AG04449 (cell line): ENCODE measurements at regions of chr4 and their contacts with region 1.

Region 1: DNA sequence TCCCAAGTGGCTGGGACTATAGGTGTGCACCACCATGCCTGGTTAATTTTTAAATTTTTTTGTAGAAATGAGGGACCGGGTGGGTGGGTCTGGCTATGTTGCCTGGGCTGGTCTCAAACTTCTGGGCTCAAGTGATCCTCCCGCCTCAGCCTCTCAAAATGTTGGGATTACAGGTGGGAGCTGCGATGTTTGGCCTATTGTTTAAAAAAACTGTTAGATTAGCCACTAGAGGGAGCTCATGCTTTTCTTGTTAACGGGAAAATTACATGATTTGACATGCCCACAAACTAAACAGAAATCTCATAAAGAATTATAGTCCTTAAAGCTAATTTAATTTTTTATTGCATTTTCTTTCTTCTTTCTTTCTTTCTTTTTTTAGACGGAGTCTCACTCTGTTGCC is 5.0 kb upstream of the SDAD1 start:
- DNase-seq: no peak
- H3K4me3 ChIP-seq: no peak overlapping the region
- CTCF ChIP-seq: peak; percentile 34

Region 2: DNA sequence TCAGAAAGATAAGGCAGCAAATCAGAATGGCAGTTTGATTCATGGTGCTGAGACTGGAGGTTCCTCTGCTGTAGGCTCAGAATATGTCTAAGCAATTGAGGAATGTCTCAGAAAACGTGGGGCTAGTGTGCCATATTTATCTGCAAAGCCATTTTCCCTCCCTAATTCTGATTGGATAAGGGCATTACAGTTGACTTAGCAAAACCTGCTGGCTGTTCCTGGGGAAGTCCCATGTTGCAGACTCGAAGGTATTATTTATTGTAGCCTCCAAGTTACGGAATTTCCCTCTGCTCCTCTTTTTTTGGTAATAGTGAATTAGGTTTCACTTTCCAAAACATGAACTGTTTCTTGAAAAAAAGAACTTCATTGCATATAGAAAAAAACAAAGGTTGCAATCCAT is 27.7 kb after region 1 on chr4 and contains the start of gene CXCL10:
- CTCF ChIA-PET with region 1: interaction called, 22 read pairs
- POLR2A ChIA-PET with region 1: no interaction called
- DNase-seq: no peak
- H3K4me3 ChIP-seq: no peak within 1 kb of the TSS
- CTCF ChIP-seq: no peak

Region 3: GRCh38 chr4:76055016-76055415 is 59.3 kb after region 1 on chr4:
- CTCF ChIA-PET with region 1: interaction called, 26 read pairs
- POLR2A ChIA-PET with region 1: no interaction called
- DNase-seq: no peak
- H3K4me3 ChIP-seq: no peak overlapping the region
- CTCF ChIP-seq: no peak

Region 4: DNA sequence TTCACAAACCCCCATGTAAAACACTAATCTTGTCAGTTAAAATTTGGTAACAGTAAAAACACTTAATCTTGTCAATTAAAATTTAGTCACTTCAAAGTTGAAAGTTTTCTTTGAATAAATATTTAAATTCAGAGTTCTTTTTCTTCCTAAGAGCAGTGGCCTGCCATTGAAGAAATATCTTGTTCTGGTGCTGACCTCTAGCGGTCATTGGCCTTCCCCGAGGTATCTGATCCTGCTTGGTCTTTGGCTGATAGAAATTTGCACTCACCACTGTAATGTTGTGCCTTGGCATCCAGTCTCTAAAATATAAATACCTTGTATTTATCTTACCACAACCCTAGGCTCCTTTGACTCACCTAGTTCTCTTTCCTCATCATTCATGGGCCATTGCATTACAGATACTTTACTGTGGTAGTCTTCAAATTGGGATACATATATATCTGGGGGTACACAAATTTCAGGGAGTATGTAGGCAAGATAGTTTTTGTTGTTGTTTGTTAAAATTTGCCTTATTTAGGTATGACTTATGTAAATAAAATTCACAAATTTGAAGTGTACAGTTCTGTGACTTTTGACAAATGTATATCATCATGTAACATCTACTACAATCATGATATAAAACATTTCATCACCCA is 72.0 kb after region 1 on chr4:
- CTCF ChIA-PET with region 1: interaction called, 153 read pairs
- POLR2A ChIA-PET with region 1: no interaction called
- DNase-seq: peak; percentile 29
- H3K4me3 ChIP-seq: no peak overlapping the region
- CTCF ChIP-seq: peak; percentile 67

Region 5: DNA sequence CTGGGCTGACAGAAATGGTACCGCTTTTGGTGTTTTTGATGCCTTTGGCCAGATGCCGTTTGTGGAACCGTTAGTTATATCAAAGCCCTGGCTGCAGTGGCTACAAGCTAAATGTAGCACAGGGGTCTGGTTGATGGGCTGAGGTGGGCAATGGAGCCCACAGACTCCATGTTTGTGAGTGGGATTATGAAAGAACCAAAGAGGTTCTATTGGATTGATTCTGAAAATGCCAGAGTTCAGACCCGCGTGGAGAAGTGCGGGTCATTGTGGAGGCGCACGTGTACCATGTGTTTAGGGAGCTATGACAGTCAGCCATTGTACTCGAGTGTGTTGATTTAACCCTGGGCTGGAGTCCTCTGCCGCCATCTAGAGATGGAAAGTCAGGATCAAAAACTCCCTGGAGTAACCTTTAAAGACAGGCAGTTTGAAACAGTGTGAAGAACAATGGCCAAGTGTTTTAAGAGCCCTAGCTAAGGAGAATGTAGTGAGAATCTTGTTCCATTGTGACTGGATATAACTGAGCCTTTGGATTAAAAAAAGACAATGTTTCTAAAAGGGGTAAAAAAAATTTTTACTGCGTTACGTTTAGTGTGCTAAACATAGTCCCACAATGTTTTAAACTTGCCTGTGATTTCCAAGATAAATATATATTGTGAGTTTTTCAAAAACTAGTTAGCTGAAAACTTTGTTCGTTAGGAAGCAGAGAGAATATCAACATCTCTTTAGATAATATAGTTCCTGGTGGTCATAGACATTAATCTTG is 91.5 kb after region 1 on chr4:
- CTCF ChIA-PET with region 1: interaction called, 37 read pairs
- POLR2A ChIA-PET with region 1: no interaction called
- DNase-seq: no peak
- H3K4me3 ChIP-seq: no peak overlapping the region
- CTCF ChIP-seq: peak; percentile 54